ENCODE measurements at regions of chr1 and their contacts with region 1.

Region 1: GRCh38 chr1:39196244-39197215 is 8.0 kb upstream of the MACF1 start:
- DNase-seq: no peak
- ATAC-seq: no peak
- H3K4me3 ChIP-seq: no peak overlapping the region
- H3K27ac ChIP-seq: peak overlapping the region in 1 of 2 experiments; percentile 94; a peak in 3 of 6 replicates
- H3K4me1 ChIP-seq: peaks cover 63% of the 10 kb centered on the region
- CTCF ChIP-seq: no peak
- EP300 ChIP-seq: no peak
- POLR2A ChIP-seq: no peak
- RAD21 ChIP-seq: no peak

Region 2: DNA sequence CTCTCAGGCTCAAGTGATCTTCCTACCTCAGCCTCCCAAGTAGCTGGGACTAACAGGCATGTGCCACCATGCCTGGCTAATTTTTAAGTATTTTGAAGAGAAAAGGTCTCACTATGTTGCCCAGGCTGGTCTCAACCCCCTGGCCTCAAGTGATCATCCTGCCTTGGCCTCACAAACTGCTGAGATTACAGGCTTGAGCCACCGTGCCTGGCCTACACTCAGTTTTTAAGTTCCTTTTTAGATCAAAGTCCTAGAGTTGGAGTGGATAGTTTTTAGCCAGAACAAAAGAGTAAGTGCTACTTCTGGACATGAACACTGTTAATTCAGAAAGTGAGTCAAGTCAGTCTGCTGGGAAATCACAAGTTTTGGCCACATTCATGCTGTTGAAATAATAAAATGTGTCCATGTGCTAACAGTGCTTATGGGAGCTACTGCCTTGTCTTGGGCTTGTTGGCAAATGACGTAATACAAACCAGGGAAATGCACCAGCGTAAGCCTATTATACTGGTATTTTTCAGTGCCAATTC is 86.1 kb before region 1 on chr1:
- CTCF ChIA-PET with region 1: interaction called, 19 read pairs
- POLR2A ChIA-PET with region 1: interaction called, 5 read pairs
- DNase-seq: no peak
- ATAC-seq: no peak
- H3K4me3 ChIP-seq: no peak overlapping the region
- H3K27ac ChIP-seq: peak overlapping the region in 1 of 2 experiments; percentile 76; a peak in 4 of 6 replicates
- H3K4me1 ChIP-seq: peaks cover 53% of the 10 kb centered on the region
- CTCF ChIP-seq: no peak
- EP300 ChIP-seq: no peak
- POLR2A ChIP-seq: no peak
- RAD21 ChIP-seq: no peak

Region 3: GRCh38 chr1:39158327-39159086 is 38.0 kb before region 1 on chr1:
- CTCF ChIA-PET with region 1: interaction called, 16 read pairs
- POLR2A ChIA-PET with region 1: no interaction called
- DNase-seq: peak; percentile 22 to 85
- ATAC-seq: peak; percentile 85 to 87
- H3K4me3 ChIP-seq: peak overlapping the region; percentile 48
- H3K27ac ChIP-seq: peak overlapping the region; percentile 69 to 71
- H3K4me1 ChIP-seq: peaks cover 55% of the 10 kb centered on the region
- CTCF ChIP-seq: no peak
- EP300 ChIP-seq: no peak
- POLR2A ChIP-seq: no peak
- RAD21 ChIP-seq: no peak

Region 4: GRCh38 chr1:39170731-39171667 is 25.5 kb before region 1 on chr1:
- CTCF ChIA-PET with region 1: interaction called, 35 read pairs
- POLR2A ChIA-PET with region 1: no interaction called
- DNase-seq: no peak
- ATAC-seq: peak in 1 of 2 experiments; percentile 32; a peak in 3 of 6 replicates
- H3K4me3 ChIP-seq: no peak overlapping the region
- H3K27ac ChIP-seq: peak overlapping the region; percentile 41 to 91; a peak in 4 of 6 replicates
- H3K4me1 ChIP-seq: peaks cover 75% of the 10 kb centered on the region
- CTCF ChIP-seq: no peak
- EP300 ChIP-seq: no peak
- POLR2A ChIP-seq: no peak
- RAD21 ChIP-seq: no peak

Region 5: DNA sequence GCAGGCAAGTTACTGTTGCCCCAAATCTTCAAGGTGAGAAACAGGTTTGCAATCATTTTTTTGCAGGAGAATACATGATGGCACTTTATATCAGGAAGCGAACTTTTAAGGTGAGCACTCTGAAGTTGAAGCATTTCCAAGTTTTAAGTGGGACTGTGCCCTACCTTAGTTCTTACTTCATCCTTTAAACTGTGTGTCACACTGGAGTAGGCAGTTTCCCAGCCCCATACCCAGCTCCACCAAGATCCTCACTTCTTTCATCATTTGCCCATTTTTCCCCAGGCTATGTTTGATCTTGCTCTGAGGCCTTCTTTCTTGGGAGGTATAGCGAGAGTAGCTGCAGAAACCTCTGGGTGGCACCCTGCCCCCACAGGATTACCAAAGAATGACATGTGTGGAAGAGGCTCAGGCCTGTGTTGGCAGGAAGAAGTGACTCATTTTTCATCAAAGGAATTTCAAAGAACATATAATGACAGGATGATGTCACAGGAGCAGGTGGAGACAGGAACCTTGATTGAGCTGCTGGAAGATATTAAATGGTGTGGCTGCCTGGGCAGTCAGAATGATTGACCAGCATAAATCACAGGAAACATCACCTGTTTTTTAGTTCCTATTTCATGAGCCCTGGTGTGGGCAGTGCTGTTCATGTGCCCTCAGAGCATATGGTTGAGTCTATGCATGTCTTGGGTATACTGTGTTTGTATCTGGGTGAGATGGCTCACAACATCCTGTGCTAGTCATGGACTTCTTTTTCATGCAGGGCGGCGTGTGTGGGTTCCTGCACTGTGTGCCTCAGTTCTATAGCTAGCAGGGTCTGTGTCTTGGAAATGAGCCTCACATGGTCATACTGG is 12.8 kb before region 1 on chr1:
- CTCF ChIA-PET with region 1: interaction called, 22 read pairs
- POLR2A ChIA-PET with region 1: interaction called, 3 read pairs
- DNase-seq: peak; percentile 60 to 91
- ATAC-seq: peak; percentile 77 to 87
- H3K4me3 ChIP-seq: no peak overlapping the region
- H3K27ac ChIP-seq: peak overlapping the region; percentile 86 to 94
- H3K4me1 ChIP-seq: peaks cover 78% of the 10 kb centered on the region
- CTCF ChIP-seq: peak; percentile 27
- EP300 ChIP-seq: peak; percentile 93 to 95; a peak in 4 of 5 replicates
- POLR2A ChIP-seq: no peak
- RAD21 ChIP-seq: peak; percentile 54 to 63

Region 6: DNA sequence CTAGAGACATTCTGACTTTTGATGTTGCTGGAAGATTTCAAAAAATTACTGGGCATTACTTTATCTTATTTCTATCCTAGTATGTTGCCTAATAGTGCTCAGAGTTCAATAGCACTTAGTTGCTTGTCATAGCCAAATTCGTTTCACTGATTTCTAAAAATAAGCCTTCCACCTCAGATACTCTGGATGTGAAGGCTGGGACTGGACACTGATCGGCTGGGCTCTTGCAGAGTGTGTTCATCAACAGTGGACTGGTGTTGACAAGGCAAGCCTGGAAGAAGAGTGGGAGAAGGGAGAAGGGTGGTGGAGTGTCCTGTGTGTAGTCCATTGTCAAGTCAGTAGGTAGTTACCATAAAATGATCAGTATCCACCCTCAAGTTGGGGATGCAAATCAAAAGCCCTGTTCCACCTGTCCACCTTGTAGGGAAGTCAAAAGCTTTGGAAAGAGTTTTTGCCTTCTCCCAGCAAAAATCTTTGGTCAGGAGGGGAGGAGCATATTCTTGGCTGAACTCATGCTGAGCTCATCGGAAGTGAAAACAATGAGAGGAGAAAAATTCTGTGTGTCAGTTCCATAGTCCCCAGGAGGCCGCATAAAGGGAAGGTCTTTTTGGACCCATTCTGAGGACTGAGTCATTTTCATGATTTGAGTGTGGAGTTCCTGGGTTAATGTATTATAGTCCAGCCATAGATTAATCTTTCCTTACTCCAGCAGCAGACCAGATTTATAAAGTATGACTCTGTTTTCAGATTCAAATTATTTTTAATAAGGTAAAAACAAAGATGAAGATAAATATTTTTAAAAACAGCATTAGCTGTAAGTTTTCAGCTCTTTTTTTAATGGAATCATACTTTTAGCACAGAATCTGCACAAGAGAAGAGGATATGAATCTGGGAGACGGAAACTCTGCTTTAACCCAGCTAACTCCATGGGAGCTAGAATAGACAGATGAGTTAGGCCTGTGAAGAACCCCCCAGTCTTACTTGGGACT is 195.5 kb after region 1 on chr1:
- CTCF ChIA-PET with region 1: interaction called, 12 read pairs
- POLR2A ChIA-PET with region 1: no interaction called
- DNase-seq: peak; percentile 74 to 75
- ATAC-seq: peak; percentile 76 to 85
- H3K4me3 ChIP-seq: peak overlapping the region; percentile 19; the same call in 1 of the 3 replicates
- H3K27ac ChIP-seq: peak overlapping the region; percentile 89 to 93
- H3K4me1 ChIP-seq: peaks cover 75% of the 10 kb centered on the region
- CTCF ChIP-seq: no peak
- EP300 ChIP-seq: peak in 1 of 2 experiments; percentile 39; a peak in 1 of 5 replicates
- POLR2A ChIP-seq: no peak
- RAD21 ChIP-seq: no peak